ENCODE measurements at regions of chr14 and their contacts with region 1.

Region 1: GRCh38 chr14:94129111-94129757 is at the start of gene IFI27L2:
- DNase-seq: peak; percentile 20 to 81 (median 50)
- ATAC-seq: peak; percentile 93 to 96 (median 96)
- H3K4me3 ChIP-seq: peak within 1 kb of the TSS; percentile 61 to 66
- H3K4me3 Mint-ChIP-seq: peak within 1 kb of the TSS; percentile 86 to 88 (median 88)
- H3K27ac ChIP-seq: peak within 1 kb of the TSS; percentile 38
- H3K27ac Mint-ChIP-seq: peak within 1 kb of the TSS; percentile 63 to 74
- H3K4me1 ChIP-seq: peaks cover 7 to 20% of the 10 kb centered on the region in 2 experiments
- H3K4me1 Mint-ChIP-seq: peaks cover 15 to 23% (median 19%) of the 10 kb centered on the region in 3 donors
- H3K27me3 ChIP-seq: peaks cover 0 to 4% of the 10 kb centered on the region in 2 experiments
- H3K27me3 Mint-ChIP-seq: peaks cover 3 to 4% of the 10 kb centered on the region in 2 donors
- total RNA-seq, gene IFI27L2: 18.2 to 37.4 (median 27.7) TPM

Region 2: DNA sequence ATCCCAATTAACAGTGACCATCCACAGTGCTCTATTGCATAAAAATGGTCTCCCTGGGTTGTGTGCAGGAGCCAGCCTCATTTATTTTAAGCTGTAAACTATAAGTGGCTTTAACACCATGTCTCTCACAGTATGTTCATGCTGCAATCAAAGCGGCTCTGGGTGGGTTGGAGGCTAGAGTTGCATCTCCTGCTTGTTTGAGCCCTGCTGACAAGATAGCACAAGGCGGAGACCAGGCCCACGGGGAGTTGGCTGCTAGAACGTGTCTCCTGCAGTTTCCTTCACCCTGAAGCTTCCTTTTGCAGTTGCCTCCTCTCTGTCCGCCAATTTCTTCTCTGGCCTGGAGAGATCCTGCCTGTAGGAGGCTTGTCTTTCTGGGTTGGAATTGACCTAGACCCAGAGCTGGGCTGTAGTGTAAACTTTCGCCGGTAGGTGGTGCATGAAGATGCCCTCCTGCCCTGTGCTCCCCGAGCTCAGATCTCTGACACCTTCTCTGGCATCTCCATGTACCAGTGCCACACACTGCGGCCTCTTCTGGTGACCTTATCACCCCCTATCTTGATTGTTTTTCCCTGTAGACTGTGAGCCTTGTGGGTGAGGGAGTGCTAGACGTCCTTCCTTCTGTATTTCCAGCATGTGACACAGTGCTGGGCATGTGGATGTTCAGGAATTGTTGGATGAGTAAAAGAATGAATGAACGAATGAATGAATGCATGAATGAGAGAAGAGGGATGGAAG is 92.8 kb before region 1 on chr14:
- CTCF ChIA-PET with region 1: interaction called, 14 to 50 read pairs
- POLR2A ChIA-PET with region 1: interaction called in 1 of 2 experiments, 3 read pairs
- DNase-seq: peak; percentile 32 to 85 (median 67)
- ATAC-seq: peak; percentile 70 to 92 (median 86)
- H3K4me3 ChIP-seq: no peak overlapping the region
- H3K4me3 Mint-ChIP-seq: no peak overlapping the region
- H3K27ac ChIP-seq: no peak overlapping the region
- H3K27ac Mint-ChIP-seq: no peak overlapping the region
- H3K4me1 ChIP-seq: peaks cover 0 to 5% of the 10 kb centered on the region in 2 experiments
- H3K4me1 Mint-ChIP-seq: peaks cover 3 to 12% (median 4%) of the 10 kb centered on the region in 3 donors
- H3K27me3 ChIP-seq: peaks cover 0 to 5% of the 10 kb centered on the region in 2 experiments
- H3K27me3 Mint-ChIP-seq: no peaks in the 10 kb centered on the region

Region 3: GRCh38 chr14:94080471-94081289 is 48.6 kb before region 1 on chr14 and contains the start of gene DDX24:
- CTCF ChIA-PET with region 1: interaction called, 6 to 20 read pairs
- POLR2A ChIA-PET with region 1: interaction called, 3 to 11 read pairs
- DNase-seq: peak; percentile 87 to 99 (median 96)
- ATAC-seq: peak; percentile 97 to 99 (median 98)
- H3K4me3 ChIP-seq: peak within 1 kb of the TSS; percentile 96 to 100
- H3K4me3 Mint-ChIP-seq: peak within 1 kb of the TSS; percentile 99 to 100 (median 100)
- H3K27ac ChIP-seq: peak within 1 kb of the TSS; percentile 94
- H3K27ac Mint-ChIP-seq: peak within 1 kb of the TSS; percentile 98 to 99
- H3K4me1 ChIP-seq: peaks cover 30 to 31% of the 10 kb centered on the region in 2 experiments
- H3K4me1 Mint-ChIP-seq: peaks cover 48 to 53% (median 52%) of the 10 kb centered on the region in 3 donors
- H3K27me3 ChIP-seq: no peaks in the 10 kb centered on the region
- H3K27me3 Mint-ChIP-seq: no peaks in the 10 kb centered on the region
- total RNA-seq, gene DDX24: 258 to 448 (median 265) TPM

Region 4: DNA sequence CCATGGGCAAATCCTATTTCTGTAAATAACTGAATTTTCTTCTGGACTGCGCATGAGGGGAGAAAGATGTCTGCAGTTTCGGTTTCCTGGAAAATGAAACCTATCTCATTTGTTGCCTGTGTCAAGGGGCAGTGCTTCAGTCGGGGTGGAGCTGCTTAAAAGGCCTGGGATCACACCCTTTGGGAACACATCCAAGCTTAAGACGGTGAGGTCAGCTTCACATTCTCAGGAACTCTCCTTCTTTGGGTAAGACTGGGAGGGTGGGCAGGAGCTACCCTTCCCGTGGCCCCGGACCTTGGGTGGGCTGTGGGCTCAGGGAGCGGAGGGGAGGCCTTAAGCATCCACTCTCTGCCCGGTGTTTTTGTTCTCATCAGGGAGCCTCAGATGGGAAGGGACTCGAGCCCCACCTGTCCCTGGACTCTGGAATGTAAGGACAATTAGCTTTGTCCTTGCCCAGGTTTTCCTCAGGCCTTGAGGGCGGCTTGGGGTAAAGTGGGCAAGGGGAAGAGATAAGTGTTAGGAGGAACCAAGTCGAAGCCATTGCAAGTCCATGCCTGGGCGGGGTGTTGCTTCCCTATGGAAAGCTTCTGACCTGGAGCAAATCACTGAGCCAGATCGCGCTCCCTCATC is 18.6 kb before region 1 on chr14 and contains the start of gene IFI27:
- CTCF ChIA-PET with region 1: no interaction called
- POLR2A ChIA-PET with region 1: no interaction called
- DNase-seq: no peak
- ATAC-seq: no peak
- H3K4me3 ChIP-seq: no peak within 1 kb of the TSS
- H3K4me3 Mint-ChIP-seq: no peak within 1 kb of the TSS
- H3K27ac ChIP-seq: no peak within 1 kb of the TSS
- H3K27ac Mint-ChIP-seq: no peak within 1 kb of the TSS
- H3K4me1 ChIP-seq: no peaks in the 10 kb centered on the region
- H3K4me1 Mint-ChIP-seq: no peaks in the 10 kb centered on the region
- H3K27me3 ChIP-seq: peaks cover 0 to 16% of the 10 kb centered on the region in 2 experiments
- H3K27me3 Mint-ChIP-seq: peaks cover 3 to 9% of the 10 kb centered on the region in 2 donors
- total RNA-seq, gene IFI27: 1.6 to 6.1 (median 1.8) TPM

Region 5: GRCh38 chr14:94170136-94170535 is 40.9 kb after region 1 on chr14:
- CTCF ChIA-PET with region 1: interaction called in 1 of 2 experiments, 10 read pairs
- POLR2A ChIA-PET with region 1: interaction called in 1 of 2 experiments, 3 read pairs
- DNase-seq: no peak
- ATAC-seq: no peak
- H3K4me3 ChIP-seq: no peak overlapping the region
- H3K4me3 Mint-ChIP-seq: no peak overlapping the region
- H3K27ac ChIP-seq: no peak overlapping the region
- H3K27ac Mint-ChIP-seq: no peak overlapping the region
- H3K4me1 ChIP-seq: peaks cover 3 to 15% of the 10 kb centered on the region in 2 experiments
- H3K4me1 Mint-ChIP-seq: peaks cover 3 to 12% (median 9%) of the 10 kb centered on the region in 3 donors
- H3K27me3 ChIP-seq: peaks cover 8 to 15% of the 10 kb centered on the region in 2 experiments
- H3K27me3 Mint-ChIP-seq: peaks cover 0 to 1% of the 10 kb centered on the region in 2 donors

Region 6: GRCh38 chr14:94180655-94181271 is 51.5 kb after region 1 on chr14:
- CTCF ChIA-PET with region 1: interaction called, 11 to 53 read pairs
- POLR2A ChIA-PET with region 1: interaction called in 1 of 2 experiments, 4 read pairs
- DNase-seq: peak in 3 of 35 experiments; percentile 5 to 71 (median 29)
- ATAC-seq: peak; percentile 67 to 83 (median 76)
- H3K4me3 ChIP-seq: peak overlapping the region in 1 of 2 donors; percentile 40
- H3K4me3 Mint-ChIP-seq: peak overlapping the region; percentile 46 to 57 (median 55)
- H3K27ac ChIP-seq: peak overlapping the region; percentile 65
- H3K27ac Mint-ChIP-seq: peak overlapping the region; percentile 75 to 79
- H3K4me1 ChIP-seq: peaks cover 0 to 3% of the 10 kb centered on the region in 2 experiments
- H3K4me1 Mint-ChIP-seq: peaks cover 16 to 19% (median 17%) of the 10 kb centered on the region in 3 donors
- H3K27me3 ChIP-seq: peaks cover 3 to 15% of the 10 kb centered on the region in 2 experiments
- H3K27me3 Mint-ChIP-seq: peaks cover 0 to 6% of the 10 kb centered on the region in 2 donors

Region 7: DNA sequence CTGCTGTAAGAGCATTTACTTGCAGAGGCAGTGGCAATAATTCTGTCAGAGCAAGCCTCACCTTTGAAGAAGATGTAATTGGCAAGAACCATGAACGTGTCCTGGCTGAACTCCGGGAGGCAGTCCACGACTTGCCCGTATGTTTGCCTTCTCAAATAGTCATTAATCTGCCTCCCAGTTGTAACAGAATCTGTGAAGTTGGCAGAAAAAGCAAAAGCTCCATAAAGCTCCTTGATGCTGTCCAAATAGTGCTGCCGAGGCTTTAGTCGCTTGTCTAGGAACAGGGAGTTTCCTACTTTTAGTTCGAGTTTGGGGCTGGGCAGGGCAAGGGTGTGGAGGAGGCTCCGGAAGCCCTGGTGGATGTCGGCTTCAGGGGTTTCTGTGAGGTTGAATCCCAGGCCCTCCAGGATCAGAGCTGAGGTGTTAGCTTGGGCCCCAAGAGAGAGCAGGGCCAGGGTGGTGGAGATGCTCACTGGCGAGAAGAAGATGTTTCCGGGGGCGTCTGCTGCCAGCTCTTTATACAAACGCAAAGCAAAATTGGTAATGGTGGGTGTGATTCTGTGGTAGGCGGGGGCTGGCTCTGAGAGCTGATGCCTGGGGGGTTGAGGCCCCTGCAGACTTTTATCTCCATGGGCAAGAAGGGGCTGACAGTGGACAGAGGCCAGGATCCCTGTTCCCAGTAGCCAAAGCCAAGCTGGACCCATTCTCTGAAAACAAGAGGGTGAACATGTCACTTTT is 319.0 kb after region 1 on chr14:
- CTCF ChIA-PET with region 1: no interaction called
- POLR2A ChIA-PET with region 1: no interaction called
- DNase-seq: no peak
- ATAC-seq: no peak
- H3K4me3 ChIP-seq: no peak overlapping the region
- H3K4me3 Mint-ChIP-seq: no peak overlapping the region
- H3K27ac ChIP-seq: no peak overlapping the region
- H3K27ac Mint-ChIP-seq: no peak overlapping the region
- H3K4me1 ChIP-seq: no peaks in the 10 kb centered on the region
- H3K4me1 Mint-ChIP-seq: no peaks in the 10 kb centered on the region
- H3K27me3 ChIP-seq: peaks cover 0 to 11% of the 10 kb centered on the region in 2 experiments
- H3K27me3 Mint-ChIP-seq: peaks cover 3 to 8% of the 10 kb centered on the region in 2 donors